HCT116 (cell line): ENCODE measurements at regions of chr9 and their contacts with region 1.

Region 1: GRCh38 chr9:72217306-72217842 is 68.1 kb downstream of the GDA start:
- DNase-seq: no peak
- ATAC-seq: no peak
- H3K4me3 ChIP-seq: no peak overlapping the region
- H3K27ac ChIP-seq: no peak overlapping the region
- H3K4me1 ChIP-seq: no peaks in the 10 kb centered on the region
- H3K27me3 ChIP-seq: no peaks in the 10 kb centered on the region
- CTCF ChIP-seq: no peak
- POLR2A ChIP-seq: no peak
- RAD21 ChIP-seq: no peak

Region 2: GRCh38 chr9:72232778-72233177 is 15.4 kb after region 1 on chr9:
- CTCF ChIA-PET with region 1: no interaction called
- POLR2A ChIA-PET with region 1: no interaction called
- RAD21 ChIA-PET with region 1: no interaction called
- intact Hi-C with region 1: no loop called
- DNase-seq: no peak
- ATAC-seq: no peak
- H3K4me3 ChIP-seq: no peak overlapping the region
- H3K27ac ChIP-seq: no peak overlapping the region
- H3K4me1 ChIP-seq: no peaks in the 10 kb centered on the region
- H3K27me3 ChIP-seq: no peaks in the 10 kb centered on the region
- CTCF ChIP-seq: no peak
- POLR2A ChIP-seq: no peak
- RAD21 ChIP-seq: no peak

Region 3: GRCh38 chr9:72254901-72255535 is 37.6 kb after region 1 on chr9:
- CTCF ChIA-PET with region 1: no interaction called
- POLR2A ChIA-PET with region 1: no interaction called
- RAD21 ChIA-PET with region 1: no interaction called
- intact Hi-C with region 1: loop called (anchors 5 kb)
- DNase-seq: no peak
- ATAC-seq: 0 out of 2 replicates have a peak, but pooled peaks have one; percentile 26
- H3K4me3 ChIP-seq: no peak overlapping the region
- H3K27ac ChIP-seq: no peak overlapping the region
- H3K4me1 ChIP-seq: peaks cover 0 to 19% of the 10 kb centered on the region in 2 experiments; a peak in 2 of 4 replicates
- H3K27me3 ChIP-seq: no peaks in the 10 kb centered on the region
- CTCF ChIP-seq: no peak
- POLR2A ChIP-seq: no peak
- RAD21 ChIP-seq: no peak